Left colon (tissue), 2 donors: ENCODE measurements at regions of chr4 and their contacts with region 1.

Region 1: DNA sequence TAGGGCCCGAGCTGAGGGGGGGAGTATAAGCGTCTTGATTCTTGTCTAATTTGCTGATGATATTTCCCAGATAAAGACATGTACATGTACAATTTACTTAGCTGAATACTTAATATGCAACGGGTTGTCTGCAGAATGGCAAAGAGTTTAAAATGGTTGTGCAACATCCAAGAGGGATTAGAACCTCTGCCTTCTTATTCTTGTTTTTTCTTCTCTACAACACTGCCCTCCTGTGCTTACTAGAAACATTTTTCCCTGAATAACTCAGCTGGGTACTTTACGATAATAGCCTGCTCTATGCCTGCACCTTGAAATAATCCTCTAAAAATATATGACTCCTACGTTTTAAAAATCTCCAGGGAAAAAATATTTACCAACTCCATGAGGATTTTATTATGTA is 41.8 kb downstream of the INTS12 start:
- DNase-seq: no peak
- ATAC-seq: peak; percentile 45

Region 2: GRCh38 chr4:105283501-105283900 is 383.2 kb before region 1 on chr4:
- intact Hi-C with region 1: no loop called
- DNase-seq: no peak
- ATAC-seq: no peak

Region 3: DNA sequence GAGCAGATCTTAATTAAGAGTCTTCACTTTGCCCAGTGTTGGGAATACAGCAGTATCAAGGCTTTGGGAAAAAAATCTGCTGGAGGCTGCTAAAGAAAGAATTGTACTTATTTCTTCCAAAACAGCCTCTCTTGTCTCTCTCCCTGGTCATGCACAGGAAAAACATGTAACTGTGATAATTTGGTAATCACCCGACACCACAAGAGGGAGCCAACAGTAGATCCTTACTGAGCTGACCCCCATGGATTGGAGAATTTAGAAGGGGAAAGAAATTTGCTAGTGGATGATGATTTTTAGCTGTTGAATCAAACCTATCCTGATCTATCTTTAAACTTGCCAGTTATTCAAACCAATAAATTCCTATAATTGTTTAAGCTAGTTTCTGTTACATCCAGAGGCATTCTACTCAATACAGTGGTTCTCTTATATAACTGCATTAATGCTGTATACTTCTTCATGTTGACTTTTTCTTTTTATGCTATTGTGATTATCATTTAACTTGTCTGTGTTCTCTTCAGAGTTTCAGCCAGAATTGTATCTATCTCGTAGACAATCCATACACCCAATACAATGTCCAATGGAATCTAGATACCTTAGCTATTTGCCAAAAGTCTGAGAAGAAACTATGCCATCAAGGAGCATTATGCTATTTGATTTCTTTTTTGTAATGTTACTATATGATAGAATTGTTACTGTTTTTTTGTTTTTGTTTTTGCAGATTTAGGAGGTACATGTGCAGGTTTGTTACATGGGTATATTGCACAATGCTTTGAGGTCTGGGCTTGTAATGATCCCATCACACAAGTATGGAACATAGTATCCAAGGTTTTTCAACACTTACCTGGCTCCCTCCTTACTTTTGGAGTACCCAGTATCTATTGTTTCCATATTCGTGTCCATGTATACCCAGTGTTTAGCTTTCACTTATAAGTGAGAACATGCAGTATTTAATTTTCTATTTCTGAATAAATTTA is 145.6 kb before region 1 on chr4:
- intact Hi-C with region 1: loop called in 1 of 2 experiments (anchors 10 kb)
- DNase-seq: peak in 1 of 2 donors; percentile 41
- ATAC-seq: peak; percentile 73

Region 4: GRCh38 chr4:105698607-105699006 is 31.9 kb after region 1 on chr4:
- intact Hi-C with region 1: no loop called
- DNase-seq: no peak
- ATAC-seq: no peak

Region 5: GRCh38 chr4:105765690-105766407 is 99.2 kb after region 1 on chr4:
- intact Hi-C with region 1: no loop called
- DNase-seq: no peak
- ATAC-seq: peak; percentile 40

Region 6: GRCh38 chr4:106344647-106344970 is 677.9 kb after region 1 on chr4:
- intact Hi-C with region 1: no loop called
- DNase-seq: no peak
- ATAC-seq: no peak